H1 (cell line): ENCODE measurements at regions of chr2 and their contacts with region 1.

Region 1: GRCh38 chr2:201654616-201655384 is 11.5 kb upstream of the TMEM237 start:
- DNase-seq: no peak
- H3K4me3 ChIP-seq: no peak overlapping the region
- H3K27ac ChIP-seq: no peak overlapping the region
- H3K4me1 ChIP-seq: no peaks in the 10 kb centered on the region; a peak in 1 of 7 replicates
- H3K27me3 ChIP-seq: no peaks in the 10 kb centered on the region
- CTCF ChIP-seq: no peak
- EP300 ChIP-seq: no peak
- POLR2A ChIP-seq: no peak
- RAD21 ChIP-seq: no peak

Region 2: GRCh38 chr2:201558665-201559064 is 96.1 kb before region 1 on chr2:
- CTCF ChIA-PET with region 1: no interaction called
- POLR2A ChIA-PET with region 1: no interaction called
- DNase-seq: no peak
- H3K4me3 ChIP-seq: no peak overlapping the region
- H3K27ac ChIP-seq: no peak overlapping the region
- H3K4me1 ChIP-seq: no peaks in the 10 kb centered on the region
- H3K27me3 ChIP-seq: no peaks in the 10 kb centered on the region
- CTCF ChIP-seq: peak; percentile 38 to 53 (median 47); a peak in 3 of 4 replicates
- EP300 ChIP-seq: no peak
- POLR2A ChIP-seq: no peak
- RAD21 ChIP-seq: peak; percentile 15 to 34; a peak in 2 of 4 replicates

Region 3: GRCh38 chr2:201642579-201643215 is 12.1 kb before region 1 on chr2:
- CTCF ChIA-PET with region 1: interaction called, 6 read pairs
- POLR2A ChIA-PET with region 1: interaction called, 17 read pairs
- DNase-seq: peak; percentile 39 to 97
- H3K4me3 ChIP-seq: peak overlapping the region; percentile 93 to 98 (median 96)
- H3K27ac ChIP-seq: peak overlapping the region; percentile 82
- H3K4me1 ChIP-seq: peaks cover 0 to 5% (median 0%) of the 10 kb centered on the region in 4 experiments; a peak in 1 of 7 replicates
- H3K27me3 ChIP-seq: no peaks in the 10 kb centered on the region
- CTCF ChIP-seq: no peak
- EP300 ChIP-seq: no peak; a peak in 1 of 3 replicates
- POLR2A ChIP-seq: peak; percentile 80 to 82; a peak in 2 of 3 replicates
- RAD21 ChIP-seq: no peak